BJ (cell line): ENCODE measurements at regions of chr11 and their contacts with region 1.

Region 1: DNA sequence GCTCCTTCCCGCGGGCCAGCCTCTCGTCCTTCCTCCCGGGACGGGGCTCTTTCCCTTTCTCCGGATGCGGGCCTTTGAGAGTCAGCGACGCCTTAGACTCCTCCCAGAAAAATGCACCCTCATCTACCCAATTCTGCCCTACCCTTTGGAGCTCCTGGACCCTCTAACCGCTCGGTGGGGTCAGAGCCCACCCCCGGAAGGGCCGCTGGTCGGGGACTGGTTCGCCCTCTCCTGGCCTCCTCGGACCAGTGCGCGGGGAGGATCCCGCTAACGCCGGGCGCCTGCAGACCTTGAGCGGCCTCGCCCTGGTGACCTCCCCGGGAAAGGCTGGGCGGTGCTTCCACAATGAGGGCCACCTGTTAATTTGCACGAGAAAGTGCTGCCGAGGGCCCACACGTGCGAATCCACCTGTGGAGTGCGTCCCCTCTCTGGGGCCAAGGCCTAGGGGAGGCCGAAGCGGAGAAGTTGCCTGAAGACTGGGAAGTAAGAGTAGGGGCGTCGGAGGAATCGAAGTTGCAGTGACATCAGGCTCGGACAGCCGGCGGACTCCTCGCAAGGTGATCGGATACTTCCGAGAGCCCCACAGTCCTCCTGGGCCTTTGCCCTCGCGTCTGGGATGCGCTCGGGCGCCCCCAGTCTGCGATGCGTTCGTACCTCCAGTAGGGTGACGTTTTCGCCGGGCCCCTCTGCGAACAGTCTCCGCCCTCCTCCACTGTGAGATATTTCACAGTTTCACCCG is 61.5 kb downstream of the ENDOD1 start:
- DNase-seq: no peak
- H3K4me3 ChIP-seq: peak overlapping the region; percentile 48
- H3K27me3 ChIP-seq: no peaks in the 10 kb centered on the region; the same call in 1 of the 2 replicates
- CTCF ChIP-seq: peak; percentile 81

Region 2: DNA sequence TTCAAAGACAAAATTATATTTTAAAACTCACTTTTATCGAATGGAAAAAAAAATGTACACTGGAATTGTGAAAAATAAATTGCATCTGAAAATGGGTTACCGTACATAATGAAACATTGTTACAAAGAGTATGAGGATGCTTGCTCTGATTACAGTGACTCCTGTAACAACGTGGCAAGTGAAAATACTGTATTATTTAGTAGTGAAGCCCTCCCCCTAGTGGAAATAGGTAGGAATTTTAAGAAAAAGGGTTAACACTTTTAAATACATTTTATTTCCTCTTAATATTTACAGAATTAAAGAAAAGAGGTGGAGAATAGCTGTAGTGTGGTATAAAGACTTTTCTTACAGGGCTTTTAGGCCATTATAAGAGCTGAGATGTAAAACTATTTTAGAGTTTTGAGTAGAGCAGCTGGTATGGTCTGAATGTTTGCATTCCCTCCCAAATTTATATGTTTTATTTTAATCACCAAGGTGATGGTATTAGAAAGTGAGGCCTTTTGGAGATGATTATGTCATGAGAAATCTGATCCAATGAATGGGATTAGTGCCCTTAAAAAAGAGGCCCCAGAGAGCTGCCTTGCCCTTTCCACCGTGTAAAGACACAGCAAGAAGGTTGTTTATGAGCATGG is 613.3 kb after region 1 on chr11:
- CTCF ChIA-PET with region 1: interaction called, 163 read pairs
- POLR2A ChIA-PET with region 1: no interaction called
- DNase-seq: no peak
- H3K4me3 ChIP-seq: no peak overlapping the region
- H3K27me3 ChIP-seq: peaks cover 6% of the 10 kb centered on the region
- CTCF ChIP-seq: peak; percentile 58